ENCODE measurements at regions of chr7 and their contacts with region 1.

Region 1: GRCh38 chr7:131302876-131303707 is 24.6 kb upstream of the MKLN1 start:
- DNase-seq: peak in 1 of 2 experiments; percentile 29
- H3K4me3 ChIP-seq: no peak overlapping the region
- H3K27ac ChIP-seq: no peak overlapping the region
- H3K4me1 ChIP-seq: peaks cover 2 to 7% (median 4%) of the 10 kb centered on the region in 4 experiments; a peak in 4 of 7 replicates
- H3K27me3 ChIP-seq: no peaks in the 10 kb centered on the region
- CTCF ChIP-seq: peak; percentile 72 to 78 (median 74)
- EP300 ChIP-seq: no peak
- POLR2A ChIP-seq: no peak
- RAD21 ChIP-seq: peak; percentile 90 to 95

Region 2: GRCh38 chr7:131068604-131069021 is 234.5 kb before region 1 on chr7:
- CTCF ChIA-PET with region 1: interaction called, 33 read pairs
- POLR2A ChIA-PET with region 1: no interaction called
- DNase-seq: no peak
- H3K4me3 ChIP-seq: no peak overlapping the region
- H3K27ac ChIP-seq: no peak overlapping the region
- H3K4me1 ChIP-seq: peaks cover 0 to 6% (median 2%) of the 10 kb centered on the region in 4 experiments; a peak in 2 of 7 replicates
- H3K27me3 ChIP-seq: no peaks in the 10 kb centered on the region
- CTCF ChIP-seq: peak in 1 of 3 experiments; percentile 15; a peak in 1 of 4 replicates
- EP300 ChIP-seq: no peak
- POLR2A ChIP-seq: no peak
- RAD21 ChIP-seq: peak in 1 of 2 experiments; percentile 23; a peak in 1 of 4 replicates

Region 3: GRCh38 chr7:131293018-131293417 is 10.1 kb before region 1 on chr7:
- CTCF ChIA-PET with region 1: interaction called, 16 read pairs
- POLR2A ChIA-PET with region 1: no interaction called
- DNase-seq: no peak
- H3K4me3 ChIP-seq: no peak overlapping the region
- H3K27ac ChIP-seq: no peak overlapping the region
- H3K4me1 ChIP-seq: no peaks in the 10 kb centered on the region
- H3K27me3 ChIP-seq: no peaks in the 10 kb centered on the region
- CTCF ChIP-seq: no peak
- EP300 ChIP-seq: no peak
- POLR2A ChIP-seq: no peak
- RAD21 ChIP-seq: no peak

Region 4: GRCh38 chr7:131383417-131384285 is 80.6 kb after region 1 on chr7:
- CTCF ChIA-PET with region 1: no interaction called
- POLR2A ChIA-PET with region 1: no interaction called
- DNase-seq: no peak
- H3K4me3 ChIP-seq: no peak overlapping the region
- H3K27ac ChIP-seq: no peak overlapping the region
- H3K4me1 ChIP-seq: peaks cover 0 to 5% (median 2%) of the 10 kb centered on the region in 4 experiments; a peak in 2 of 7 replicates
- H3K27me3 ChIP-seq: no peaks in the 10 kb centered on the region
- CTCF ChIP-seq: no peak
- EP300 ChIP-seq: no peak
- POLR2A ChIP-seq: no peak
- RAD21 ChIP-seq: no peak